B cell (primary cell): ENCODE measurements at regions of chr10 and their contacts with region 1.

Region 1: GRCh38 chr10:102009801-102010425 is 46.1 kb downstream of the ARMH3 start:
- DNase-seq: peak; percentile 83
- ATAC-seq: peak; percentile 92
- H3K4me3 ChIP-seq: no peak overlapping the region
- H3K4me3 Mint-ChIP-seq: no peak overlapping the region
- H3K27ac ChIP-seq: peak overlapping the region in 1 of 2 donors; percentile 44
- H3K27ac Mint-ChIP-seq: peak overlapping the region; percentile 8
- H3K4me1 ChIP-seq: peaks cover 54 to 57% of the 10 kb centered on the region in 2 donors
- H3K4me1 Mint-ChIP-seq: peaks cover 46% of the 10 kb centered on the region
- H3K27me3 ChIP-seq: no peaks in the 10 kb centered on the region
- H3K27me3 Mint-ChIP-seq: no peaks in the 10 kb centered on the region
- CTCF ChIP-seq: peak; percentile 94

Region 2: GRCh38 chr10:101214446-101215396 is 795.2 kb before region 1 on chr10:
- CTCF ChIA-PET with region 1: no interaction called
- POLR2A ChIA-PET with region 1: no interaction called
- intact Hi-C with region 1: loop called (anchors 10 kb)
- DNase-seq: peak; percentile 83
- ATAC-seq: peak; percentile 78
- H3K4me3 ChIP-seq: peak overlapping the region in 1 of 5 experiments; percentile 53
- H3K4me3 Mint-ChIP-seq: peak overlapping the region; percentile 80
- H3K27ac ChIP-seq: no peak overlapping the region
- H3K27ac Mint-ChIP-seq: no peak overlapping the region
- H3K4me1 ChIP-seq: peaks cover 44 to 48% of the 10 kb centered on the region in 2 donors
- H3K4me1 Mint-ChIP-seq: peaks cover 34% of the 10 kb centered on the region
- H3K27me3 ChIP-seq: peaks cover 0 to 95% (median 68%) of the 10 kb centered on the region in 4 experiments
- H3K27me3 Mint-ChIP-seq: peaks cover 67% of the 10 kb centered on the region
- CTCF ChIP-seq: peak; percentile 87

Region 3: GRCh38 chr10:101858723-101859500 is 151.0 kb before region 1 on chr10:
- CTCF ChIA-PET with region 1: interaction called, 10 read pairs
- POLR2A ChIA-PET with region 1: no interaction called
- intact Hi-C with region 1: no loop called
- DNase-seq: no peak
- ATAC-seq: no peak
- H3K4me3 ChIP-seq: no peak overlapping the region
- H3K4me3 Mint-ChIP-seq: peak overlapping the region; percentile 35
- H3K27ac ChIP-seq: peak overlapping the region; percentile 47 to 52
- H3K27ac Mint-ChIP-seq: peak overlapping the region; percentile 73
- H3K4me1 ChIP-seq: peaks cover 10 to 14% of the 10 kb centered on the region in 2 donors
- H3K4me1 Mint-ChIP-seq: peaks cover 21% of the 10 kb centered on the region
- H3K27me3 ChIP-seq: no peaks in the 10 kb centered on the region
- H3K27me3 Mint-ChIP-seq: no peaks in the 10 kb centered on the region
- CTCF ChIP-seq: no peak

Region 4: GRCh38 chr10:101938316-101939281 is 71.3 kb before region 1 on chr10:
- CTCF ChIA-PET with region 1: interaction called, 10 read pairs
- POLR2A ChIA-PET with region 1: no interaction called
- intact Hi-C with region 1: no loop called
- DNase-seq: peak; percentile 43
- ATAC-seq: no peak
- H3K4me3 ChIP-seq: peak overlapping the region in 1 of 5 experiments; percentile 15
- H3K4me3 Mint-ChIP-seq: no peak overlapping the region
- H3K27ac ChIP-seq: peak overlapping the region in 1 of 2 donors; percentile 49
- H3K27ac Mint-ChIP-seq: no peak overlapping the region
- H3K4me1 ChIP-seq: peaks cover 23 to 31% of the 10 kb centered on the region in 2 donors
- H3K4me1 Mint-ChIP-seq: peaks cover 45% of the 10 kb centered on the region
- H3K27me3 ChIP-seq: no peaks in the 10 kb centered on the region
- H3K27me3 Mint-ChIP-seq: no peaks in the 10 kb centered on the region
- CTCF ChIP-seq: no peak

Region 5: DNA sequence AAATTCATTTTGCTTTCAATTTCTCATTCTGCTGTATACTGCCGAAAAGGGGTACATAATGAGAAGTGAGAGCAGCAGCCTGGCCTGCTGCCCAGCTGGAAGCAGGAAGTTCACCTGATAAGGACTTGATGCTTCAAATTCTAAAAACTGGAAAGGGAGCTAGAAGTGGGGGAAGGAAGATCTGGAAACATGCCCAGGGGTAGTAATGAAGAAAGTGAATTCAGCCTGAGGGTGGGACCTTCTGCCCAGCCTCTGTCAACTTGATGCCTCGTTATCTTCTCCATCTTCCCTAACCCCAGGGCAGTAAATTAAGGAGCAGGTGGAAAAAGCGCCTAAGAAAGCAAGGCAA is 23.3 kb before region 1 on chr10:
- CTCF ChIA-PET with region 1: interaction called, 32 read pairs
- POLR2A ChIA-PET with region 1: no interaction called
- intact Hi-C with region 1: no loop called
- DNase-seq: peak; percentile 71
- ATAC-seq: peak; percentile 85
- H3K4me3 ChIP-seq: peak overlapping the region in 3 of 5 experiments; percentile 11 to 39 (median 30)
- H3K4me3 Mint-ChIP-seq: peak overlapping the region; percentile 77
- H3K27ac ChIP-seq: peak overlapping the region; percentile 86 to 87
- H3K27ac Mint-ChIP-seq: peak overlapping the region; percentile 86
- H3K4me1 ChIP-seq: peaks cover 25 to 28% of the 10 kb centered on the region in 2 donors
- H3K4me1 Mint-ChIP-seq: peaks cover 23% of the 10 kb centered on the region
- H3K27me3 ChIP-seq: no peaks in the 10 kb centered on the region
- H3K27me3 Mint-ChIP-seq: no peaks in the 10 kb centered on the region
- CTCF ChIP-seq: no peak

Region 6: GRCh38 chr10:102055647-102056419 is 45.9 kb after region 1 on chr10 and contains the start of gene ARMH3:
- CTCF ChIA-PET with region 1: interaction called, 17 read pairs
- POLR2A ChIA-PET with region 1: interaction called, 8 read pairs
- intact Hi-C with region 1: no loop called
- DNase-seq: peak; percentile 94
- ATAC-seq: peak; percentile 91
- H3K4me3 ChIP-seq: peak within 1 kb of the TSS; percentile 76 to 99 (median 93)
- H3K4me3 Mint-ChIP-seq: peak within 1 kb of the TSS; percentile 99
- H3K27ac ChIP-seq: peak within 1 kb of the TSS; percentile 75 to 80
- H3K27ac Mint-ChIP-seq: peak within 1 kb of the TSS; percentile 98
- H3K4me1 ChIP-seq: peaks cover 15 to 26% of the 10 kb centered on the region in 2 donors
- H3K4me1 Mint-ChIP-seq: peaks cover 36% of the 10 kb centered on the region
- H3K27me3 ChIP-seq: no peaks in the 10 kb centered on the region
- H3K27me3 Mint-ChIP-seq: no peaks in the 10 kb centered on the region
- CTCF ChIP-seq: no peak
- total RNA-seq, gene ARMH3: 36.2 and 40.7 TPM in 2 replicates